CD8-positive, alpha-beta T cell (primary cell): ENCODE measurements at regions of chr9 and their contacts with region 1.

Region 1: DNA sequence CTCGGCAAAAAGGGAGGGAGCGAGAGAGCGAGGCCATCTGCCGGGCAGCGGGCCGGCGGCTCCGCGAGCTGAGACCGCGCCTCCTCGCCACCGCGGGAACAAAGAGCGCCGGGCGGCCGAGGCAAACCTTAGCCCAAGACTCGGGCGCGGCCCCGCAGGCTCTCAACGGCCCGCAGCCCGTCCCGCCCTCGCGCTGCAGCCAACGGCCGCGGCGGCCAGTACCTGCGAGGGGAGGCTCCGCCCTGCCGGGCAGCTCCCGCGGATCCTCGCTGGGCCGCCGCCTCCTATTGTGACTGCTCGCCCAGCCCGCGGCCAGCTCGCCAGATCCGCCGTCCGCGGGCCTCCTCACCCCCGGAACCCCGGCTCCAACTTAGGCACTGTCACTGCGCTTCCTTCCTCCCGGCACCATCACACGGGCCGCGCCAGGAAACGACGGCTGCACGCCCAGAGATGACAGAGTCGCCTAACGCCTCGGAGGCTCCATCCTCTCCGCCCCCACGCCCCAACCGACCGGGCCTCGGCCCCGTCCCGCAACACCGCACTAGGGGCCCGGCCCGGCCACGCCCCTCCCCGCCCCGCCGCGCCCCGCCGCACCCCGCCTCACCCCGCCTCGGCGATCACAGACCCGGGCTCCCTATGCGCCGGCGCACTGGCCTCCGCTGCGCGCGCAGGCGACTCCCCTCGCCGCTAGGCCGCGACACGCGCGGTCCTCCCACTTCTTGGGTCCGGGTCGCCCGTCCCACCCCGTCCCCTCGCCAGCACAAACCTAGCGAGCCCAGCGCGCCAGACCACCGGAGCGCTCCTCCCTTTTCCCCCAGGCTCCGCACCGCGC is 479 bp upstream of the RNF38 start:
- DNase-seq: peak; percentile 86 to 95 (median 90)
- ATAC-seq: peak; percentile 74
- H3K4me3 ChIP-seq: peak overlapping the region; percentile 70 to 85
- H3K4me3 Mint-ChIP-seq: peak overlapping the region; percentile 92
- H3K27ac ChIP-seq: peak overlapping the region; percentile 88 to 95
- H3K27ac Mint-ChIP-seq: peak overlapping the region; percentile 97
- H3K4me1 ChIP-seq: peaks cover 23% of the 10 kb centered on the region
- H3K4me1 Mint-ChIP-seq: peaks cover 43% of the 10 kb centered on the region
- H3K27me3 ChIP-seq: no peaks in the 10 kb centered on the region
- H3K27me3 Mint-ChIP-seq: no peaks in the 10 kb centered on the region
- CTCF ChIP-seq: no peak

Region 2: GRCh38 chr9:36190388-36191287 is 209.9 kb before region 1 on chr9 and contains the start of gene CLTA:
- CTCF ChIA-PET with region 1: no interaction called
- POLR2A ChIA-PET with region 1: no interaction called
- intact Hi-C with region 1: loop called in 1 of 2 experiments (anchors 1 kb)
- DNase-seq: peak; percentile 84 to 99 (median 93)
- ATAC-seq: peak; percentile 97
- H3K4me3 ChIP-seq: peak within 1 kb of the TSS; percentile 63 to 95
- H3K4me3 Mint-ChIP-seq: peak within 1 kb of the TSS; percentile 94
- H3K27ac ChIP-seq: peak within 1 kb of the TSS; percentile 74 to 80
- H3K27ac Mint-ChIP-seq: peak within 1 kb of the TSS; percentile 91
- H3K4me1 ChIP-seq: peaks cover 37% of the 10 kb centered on the region
- H3K4me1 Mint-ChIP-seq: peaks cover 50% of the 10 kb centered on the region
- H3K27me3 ChIP-seq: no peaks in the 10 kb centered on the region
- H3K27me3 Mint-ChIP-seq: no peaks in the 10 kb centered on the region
- CTCF ChIP-seq: peak; percentile 55
- total RNA-seq, gene CLTA: 39.1 to 39.6 TPM

Region 3: DNA sequence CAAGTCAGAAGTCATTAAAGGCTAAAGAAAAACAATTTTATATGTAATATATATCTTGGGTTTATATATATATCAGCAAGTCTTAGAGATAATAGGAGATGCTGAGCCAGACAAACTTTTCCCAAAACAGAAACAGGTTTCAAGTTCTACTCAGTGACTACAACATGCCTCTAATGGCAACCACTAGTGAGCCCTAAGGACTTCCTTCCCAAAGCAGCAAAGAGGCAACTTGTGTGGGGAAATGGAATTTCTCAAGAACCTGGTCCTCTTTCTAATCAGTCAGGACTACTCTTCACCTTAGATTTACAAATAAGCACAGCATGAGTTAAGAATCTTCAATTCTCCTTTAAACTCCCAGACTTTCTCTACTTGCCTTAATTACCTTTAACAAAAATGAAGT is 18.1 kb before region 1 on chr9:
- CTCF ChIA-PET with region 1: no interaction called
- POLR2A ChIA-PET with region 1: interaction called, 3 read pairs
- intact Hi-C with region 1: loop called (anchors 2 kb)
- DNase-seq: no peak
- ATAC-seq: no peak
- H3K4me3 ChIP-seq: no peak overlapping the region
- H3K4me3 Mint-ChIP-seq: peak overlapping the region; percentile 41
- H3K27ac ChIP-seq: peak overlapping the region in 1 of 2 experiments; percentile 51
- H3K27ac Mint-ChIP-seq: peak overlapping the region; percentile 42
- H3K4me1 ChIP-seq: peaks cover 24% of the 10 kb centered on the region
- H3K4me1 Mint-ChIP-seq: peaks cover 73% of the 10 kb centered on the region
- H3K27me3 ChIP-seq: no peaks in the 10 kb centered on the region
- H3K27me3 Mint-ChIP-seq: no peaks in the 10 kb centered on the region
- CTCF ChIP-seq: no peak

Region 4: GRCh38 chr9:36487482-36488388 is 87.2 kb after region 1 on chr9:
- CTCF ChIA-PET with region 1: interaction called, 17 read pairs
- POLR2A ChIA-PET with region 1: interaction called, 8 read pairs
- intact Hi-C with region 1: loop called (anchors 1 kb)
- DNase-seq: peak; percentile 82 to 97 (median 89)
- ATAC-seq: peak; percentile 85
- H3K4me3 ChIP-seq: peak overlapping the region; percentile 78 to 79
- H3K4me3 Mint-ChIP-seq: peak overlapping the region; percentile 95
- H3K27ac ChIP-seq: peak overlapping the region; percentile 86 to 95
- H3K27ac Mint-ChIP-seq: peak overlapping the region; percentile 97
- H3K4me1 ChIP-seq: peaks cover 38% of the 10 kb centered on the region
- H3K4me1 Mint-ChIP-seq: peaks cover 63% of the 10 kb centered on the region
- H3K27me3 ChIP-seq: no peaks in the 10 kb centered on the region
- H3K27me3 Mint-ChIP-seq: no peaks in the 10 kb centered on the region
- CTCF ChIP-seq: no peak

Region 5: GRCh38 chr9:36560857-36561221 is 160.3 kb after region 1 on chr9:
- CTCF ChIA-PET with region 1: interaction called, 325 read pairs
- POLR2A ChIA-PET with region 1: interaction called, 4 read pairs
- intact Hi-C with region 1: no loop called
- DNase-seq: no peak
- ATAC-seq: no peak
- H3K4me3 ChIP-seq: no peak overlapping the region
- H3K4me3 Mint-ChIP-seq: no peak overlapping the region
- H3K27ac ChIP-seq: no peak overlapping the region
- H3K27ac Mint-ChIP-seq: no peak overlapping the region
- H3K4me1 ChIP-seq: no peaks in the 10 kb centered on the region
- H3K4me1 Mint-ChIP-seq: peaks cover under 1% of the 10 kb centered on the region
- H3K27me3 ChIP-seq: peaks cover 0 to 3% of the 10 kb centered on the region in 2 experiments
- H3K27me3 Mint-ChIP-seq: no peaks in the 10 kb centered on the region
- CTCF ChIP-seq: no peak

Region 6: DNA sequence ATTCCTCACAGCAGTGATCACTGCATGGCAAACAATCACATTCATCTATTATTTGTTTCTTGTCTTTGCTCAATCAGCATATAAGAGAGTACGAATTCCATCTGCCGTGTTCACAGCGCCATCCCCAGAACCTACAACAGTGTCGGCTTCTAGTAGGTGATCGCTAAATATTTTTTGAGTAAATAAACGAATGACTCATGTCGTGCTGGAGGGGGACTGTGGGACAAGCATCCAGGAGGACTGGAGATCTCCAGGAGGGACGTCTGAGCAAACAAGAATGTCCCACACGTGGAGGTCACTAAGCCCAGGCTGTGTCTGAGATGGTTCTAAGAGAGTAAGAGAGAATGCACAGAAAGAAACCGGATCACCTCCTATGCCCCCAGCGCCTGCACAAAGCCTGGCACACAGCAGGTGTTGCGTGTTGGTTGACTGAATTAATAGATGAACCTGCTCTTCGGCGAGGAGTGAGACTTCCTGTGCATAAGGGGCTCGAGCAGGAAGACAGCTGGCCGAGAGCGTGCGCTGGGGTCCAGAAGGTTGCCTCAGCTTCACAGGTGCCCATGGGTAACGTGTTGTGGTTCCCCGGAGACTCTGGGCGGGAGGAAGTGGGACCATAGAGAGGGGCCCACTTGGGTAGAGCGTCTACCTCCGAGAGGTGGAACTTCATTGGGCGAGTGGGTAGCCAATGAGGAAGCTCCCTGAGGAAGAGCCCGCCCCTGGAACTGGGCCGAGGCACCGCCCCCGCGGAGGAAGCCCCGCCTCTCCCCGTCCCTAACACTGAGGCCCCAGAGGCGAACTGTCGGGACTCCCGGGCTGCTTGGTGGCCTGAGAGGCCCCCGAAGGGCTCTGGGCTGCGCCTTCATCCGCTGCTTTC is 365.2 kb after region 1 on chr9:
- CTCF ChIA-PET with region 1: no interaction called
- POLR2A ChIA-PET with region 1: no interaction called
- intact Hi-C with region 1: loop called (anchors 5 to 10 kb)
- DNase-seq: peak; percentile 68 to 95 (median 89)
- ATAC-seq: peak; percentile 99
- H3K4me3 ChIP-seq: peak overlapping the region; percentile 47 to 54
- H3K4me3 Mint-ChIP-seq: no peak overlapping the region
- H3K27ac ChIP-seq: peak overlapping the region; percentile 23 to 39
- H3K27ac Mint-ChIP-seq: peak overlapping the region; percentile 71
- H3K4me1 ChIP-seq: peaks cover 6% of the 10 kb centered on the region
- H3K4me1 Mint-ChIP-seq: peaks cover 6% of the 10 kb centered on the region
- H3K27me3 ChIP-seq: peaks cover 0 to 7% of the 10 kb centered on the region in 2 experiments
- H3K27me3 Mint-ChIP-seq: peaks cover 5% of the 10 kb centered on the region
- CTCF ChIP-seq: no peak

Region 7: GRCh38 chr9:37465249-37466036 is 1064.9 kb after region 1 on chr9 and contains the start of gene ZBTB5:
- CTCF ChIA-PET with region 1: no interaction called
- POLR2A ChIA-PET with region 1: no interaction called
- intact Hi-C with region 1: loop called in 1 of 2 experiments (anchors 2 kb)
- DNase-seq: peak; percentile 97 to 100 (median 99)
- ATAC-seq: peak; percentile 79
- H3K4me3 ChIP-seq: peak within 1 kb of the TSS; percentile 91 to 97
- H3K4me3 Mint-ChIP-seq: peak within 1 kb of the TSS; percentile 95
- H3K27ac ChIP-seq: peak within 1 kb of the TSS; percentile 86 to 97
- H3K27ac Mint-ChIP-seq: peak within 1 kb of the TSS; percentile 98
- H3K4me1 ChIP-seq: peaks cover 23% of the 10 kb centered on the region
- H3K4me1 Mint-ChIP-seq: peaks cover 40% of the 10 kb centered on the region
- H3K27me3 ChIP-seq: no peaks in the 10 kb centered on the region
- H3K27me3 Mint-ChIP-seq: no peaks in the 10 kb centered on the region
- CTCF ChIP-seq: no peak
- total RNA-seq, gene ZBTB5: 18.5 to 18.7 TPM